Naive thymus-derived CD4-positive, alpha-beta T cell (primary cell): ENCODE measurements at regions of chr14 and their contacts with region 1.

Region 1: GRCh38 chr14:68248481-68249255 is 429.1 kb downstream of the RAD51B start:
- DNase-seq: peak in 7 of 9 donors; percentile 34 to 75 (median 64)
- ATAC-seq: peak; percentile 89
- H3K4me3 ChIP-seq: no peak overlapping the region
- H3K4me3 Mint-ChIP-seq: no peak overlapping the region
- H3K27ac ChIP-seq: no peak overlapping the region
- H3K27ac Mint-ChIP-seq: peak overlapping the region in 7 of 9 donors; percentile 41 to 81 (median 64)
- H3K4me1 ChIP-seq: peaks cover 0 to 13% of the 10 kb centered on the region in 2 donors
- H3K4me1 Mint-ChIP-seq: peaks cover 14 to 52% (median 47%) of the 10 kb centered on the region in 7 donors
- H3K27me3 ChIP-seq: no peaks in the 10 kb centered on the region
- H3K27me3 Mint-ChIP-seq: no peaks in the 10 kb centered on the region

Region 2: GRCh38 chr14:67846029-67846610 is 402.5 kb before region 1 on chr14:
- CTCF ChIA-PET with region 1: no interaction called
- POLR2A ChIA-PET with region 1: no interaction called
- intact Hi-C with region 1: no loop called
- DNase-seq: no peak
- ATAC-seq: no peak
- H3K4me3 ChIP-seq: no peak overlapping the region
- H3K4me3 Mint-ChIP-seq: no peak overlapping the region
- H3K27ac ChIP-seq: no peak overlapping the region
- H3K27ac Mint-ChIP-seq: no peak overlapping the region
- H3K4me1 ChIP-seq: no peaks in the 10 kb centered on the region
- H3K4me1 Mint-ChIP-seq: peaks cover 0 to 20% (median 11%) of the 10 kb centered on the region in 7 donors
- H3K27me3 ChIP-seq: no peaks in the 10 kb centered on the region
- H3K27me3 Mint-ChIP-seq: no peaks in the 10 kb centered on the region

Region 3: DNA sequence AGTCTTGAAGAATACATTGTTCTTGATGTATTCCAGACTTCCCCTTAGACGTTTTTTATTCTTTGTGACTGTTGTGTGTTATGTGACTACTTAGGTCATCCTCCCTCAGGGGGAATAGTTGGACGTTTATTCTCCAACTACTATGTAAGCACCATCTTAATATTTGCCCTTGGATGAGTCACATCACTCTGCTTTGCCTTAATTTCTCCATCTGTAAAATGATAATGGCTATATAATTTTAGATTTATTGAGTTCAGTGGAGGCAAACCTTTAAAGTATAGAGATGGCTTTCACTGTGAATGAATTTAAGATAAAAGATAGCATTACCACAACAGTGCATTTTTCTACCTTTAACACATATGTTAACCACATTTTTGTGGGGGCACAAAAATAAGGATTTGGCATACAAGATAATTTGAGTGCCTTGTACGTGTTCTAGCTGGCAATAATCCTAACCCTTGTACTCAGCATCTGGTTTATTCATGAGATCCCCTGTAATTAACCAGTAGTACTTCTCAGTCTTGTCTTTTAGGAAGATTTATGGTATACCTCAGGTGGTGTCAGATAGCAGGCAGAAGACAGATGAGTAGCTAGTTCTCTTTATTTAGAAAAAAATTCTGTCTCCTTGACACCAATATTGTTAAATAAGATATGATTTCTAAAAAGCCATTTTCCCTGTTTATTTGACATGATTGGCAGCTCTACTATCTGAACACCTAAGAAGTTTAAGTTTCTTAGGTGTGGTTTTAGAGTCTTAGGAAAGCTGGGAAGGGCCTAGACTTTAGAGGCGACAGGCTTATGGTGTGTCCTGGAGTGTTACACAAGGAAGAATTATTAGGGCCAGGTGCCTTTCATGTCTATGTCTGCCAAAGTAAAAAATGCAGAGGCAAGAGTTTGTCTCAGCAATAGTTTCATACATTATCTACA is 276.8 kb before region 1 on chr14:
- CTCF ChIA-PET with region 1: no interaction called
- POLR2A ChIA-PET with region 1: no interaction called
- intact Hi-C with region 1: no loop called
- DNase-seq: no peak
- ATAC-seq: no peak
- H3K4me3 ChIP-seq: no peak overlapping the region
- H3K4me3 Mint-ChIP-seq: no peak overlapping the region
- H3K27ac ChIP-seq: no peak overlapping the region
- H3K27ac Mint-ChIP-seq: no peak overlapping the region
- H3K4me1 ChIP-seq: no peaks in the 10 kb centered on the region
- H3K4me1 Mint-ChIP-seq: no peaks in the 10 kb centered on the region
- H3K27me3 ChIP-seq: no peaks in the 10 kb centered on the region
- H3K27me3 Mint-ChIP-seq: no peaks in the 10 kb centered on the region

Region 4: GRCh38 chr14:68261092-68261842 is 12.6 kb after region 1 on chr14:
- CTCF ChIA-PET with region 1: interaction called, 16 read pairs
- POLR2A ChIA-PET with region 1: interaction called, 12 read pairs
- intact Hi-C with region 1: no loop called
- DNase-seq: peak in 4 of 9 donors; percentile 23 to 32 (median 29)
- ATAC-seq: peak; percentile 41
- H3K4me3 ChIP-seq: peak overlapping the region; percentile 10
- H3K4me3 Mint-ChIP-seq: peak overlapping the region in 9 of 10 donors; percentile 59 to 83 (median 75)
- H3K27ac ChIP-seq: peak overlapping the region; percentile 64
- H3K27ac Mint-ChIP-seq: peak overlapping the region; percentile 73 to 99 (median 92)
- H3K4me1 ChIP-seq: peaks cover 0 to 49% of the 10 kb centered on the region in 2 donors
- H3K4me1 Mint-ChIP-seq: peaks cover 41 to 85% (median 80%) of the 10 kb centered on the region in 7 donors
- H3K27me3 ChIP-seq: no peaks in the 10 kb centered on the region
- H3K27me3 Mint-ChIP-seq: no peaks in the 10 kb centered on the region

Region 5: GRCh38 chr14:68328509-68328908 is 79.8 kb after region 1 on chr14:
- CTCF ChIA-PET with region 1: no interaction called
- POLR2A ChIA-PET with region 1: no interaction called
- intact Hi-C with region 1: no loop called
- DNase-seq: no peak
- ATAC-seq: no peak
- H3K4me3 ChIP-seq: no peak overlapping the region
- H3K4me3 Mint-ChIP-seq: no peak overlapping the region
- H3K27ac ChIP-seq: no peak overlapping the region
- H3K27ac Mint-ChIP-seq: no peak overlapping the region
- H3K4me1 ChIP-seq: no peaks in the 10 kb centered on the region
- H3K4me1 Mint-ChIP-seq: peaks cover 0 to 9% (median 8%) of the 10 kb centered on the region in 7 donors
- H3K27me3 ChIP-seq: no peaks in the 10 kb centered on the region
- H3K27me3 Mint-ChIP-seq: no peaks in the 10 kb centered on the region

Region 6: GRCh38 chr14:68349900-68350629 is 101.4 kb after region 1 on chr14:
- CTCF ChIA-PET with region 1: no interaction called
- POLR2A ChIA-PET with region 1: interaction called, 3 read pairs
- intact Hi-C with region 1: loop called in 1 of 2 experiments (anchors 1 kb)
- DNase-seq: no peak
- ATAC-seq: no peak
- H3K4me3 ChIP-seq: no peak overlapping the region
- H3K4me3 Mint-ChIP-seq: no peak overlapping the region
- H3K27ac ChIP-seq: no peak overlapping the region
- H3K27ac Mint-ChIP-seq: no peak overlapping the region
- H3K4me1 ChIP-seq: no peaks in the 10 kb centered on the region
- H3K4me1 Mint-ChIP-seq: peaks cover 0 to 13% (median 10%) of the 10 kb centered on the region in 7 donors
- H3K27me3 ChIP-seq: no peaks in the 10 kb centered on the region
- H3K27me3 Mint-ChIP-seq: no peaks in the 10 kb centered on the region

Region 7: DNA sequence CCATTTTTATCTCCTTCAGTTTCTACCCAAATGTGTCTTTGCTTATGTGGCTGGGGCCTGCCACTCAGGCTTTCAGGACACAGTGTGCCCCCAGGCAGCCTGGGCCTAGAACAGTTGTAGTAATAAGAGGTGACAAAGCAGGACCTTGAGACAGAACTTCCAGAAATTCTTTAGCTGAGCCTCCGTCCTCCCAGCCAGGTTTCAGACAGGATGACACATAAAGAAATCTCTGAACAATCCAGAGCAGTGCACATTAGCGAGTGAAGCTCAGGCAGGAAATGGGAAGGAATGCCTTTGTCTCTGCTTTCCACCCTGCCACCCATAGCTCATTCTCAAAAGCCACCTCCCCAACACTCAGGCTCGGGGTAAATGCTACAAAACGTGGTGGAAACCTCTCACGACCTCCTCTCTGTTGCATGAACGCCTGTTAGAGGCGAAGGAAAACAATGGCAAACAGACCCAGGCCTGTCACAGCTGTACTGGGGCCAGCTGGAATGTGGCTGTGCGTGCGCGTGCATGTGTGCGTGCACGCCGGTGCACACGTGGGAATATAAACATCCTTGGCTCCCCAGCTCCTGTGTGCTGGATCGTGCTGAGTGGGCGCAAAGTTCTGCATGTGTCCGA is 257.5 kb after region 1 on chr14:
- CTCF ChIA-PET with region 1: interaction called, 33 read pairs
- POLR2A ChIA-PET with region 1: interaction called, 4 read pairs
- intact Hi-C with region 1: loop called in 1 of 2 experiments (anchors 1 kb)
- DNase-seq: peak in 2 of 9 donors; percentile 13 to 14
- ATAC-seq: no peak
- H3K4me3 ChIP-seq: peak overlapping the region; percentile 19
- H3K4me3 Mint-ChIP-seq: peak overlapping the region; percentile 39 to 84 (median 78)
- H3K27ac ChIP-seq: peak overlapping the region; percentile 52
- H3K27ac Mint-ChIP-seq: peak overlapping the region in 8 of 9 donors; percentile 89 to 98 (median 93)
- H3K4me1 ChIP-seq: peaks cover 29 to 66% of the 10 kb centered on the region in 2 donors
- H3K4me1 Mint-ChIP-seq: peaks cover 28 to 93% (median 86%) of the 10 kb centered on the region in 7 donors
- H3K27me3 ChIP-seq: no peaks in the 10 kb centered on the region
- H3K27me3 Mint-ChIP-seq: no peaks in the 10 kb centered on the region

Region 8: GRCh38 chr14:68780358-68781160 is 531.9 kb after region 1 on chr14:
- CTCF ChIA-PET with region 1: interaction called, 219 read pairs
- POLR2A ChIA-PET with region 1: interaction called, 203 read pairs
- intact Hi-C with region 1: no loop called
- DNase-seq: peak in 5 of 9 donors; percentile 26 to 39 (median 33)
- ATAC-seq: peak; percentile 31
- H3K4me3 ChIP-seq: peak overlapping the region; percentile 57
- H3K4me3 Mint-ChIP-seq: peak overlapping the region; percentile 74 to 87 (median 84)
- H3K27ac ChIP-seq: peak overlapping the region; percentile 65
- H3K27ac Mint-ChIP-seq: peak overlapping the region; percentile 82 to 94 (median 92)
- H3K4me1 ChIP-seq: peaks cover 62 to 68% of the 10 kb centered on the region in 2 donors
- H3K4me1 Mint-ChIP-seq: peaks cover 39 to 90% (median 82%) of the 10 kb centered on the region in 7 donors
- H3K27me3 ChIP-seq: no peaks in the 10 kb centered on the region
- H3K27me3 Mint-ChIP-seq: no peaks in the 10 kb centered on the region

Region 9: DNA sequence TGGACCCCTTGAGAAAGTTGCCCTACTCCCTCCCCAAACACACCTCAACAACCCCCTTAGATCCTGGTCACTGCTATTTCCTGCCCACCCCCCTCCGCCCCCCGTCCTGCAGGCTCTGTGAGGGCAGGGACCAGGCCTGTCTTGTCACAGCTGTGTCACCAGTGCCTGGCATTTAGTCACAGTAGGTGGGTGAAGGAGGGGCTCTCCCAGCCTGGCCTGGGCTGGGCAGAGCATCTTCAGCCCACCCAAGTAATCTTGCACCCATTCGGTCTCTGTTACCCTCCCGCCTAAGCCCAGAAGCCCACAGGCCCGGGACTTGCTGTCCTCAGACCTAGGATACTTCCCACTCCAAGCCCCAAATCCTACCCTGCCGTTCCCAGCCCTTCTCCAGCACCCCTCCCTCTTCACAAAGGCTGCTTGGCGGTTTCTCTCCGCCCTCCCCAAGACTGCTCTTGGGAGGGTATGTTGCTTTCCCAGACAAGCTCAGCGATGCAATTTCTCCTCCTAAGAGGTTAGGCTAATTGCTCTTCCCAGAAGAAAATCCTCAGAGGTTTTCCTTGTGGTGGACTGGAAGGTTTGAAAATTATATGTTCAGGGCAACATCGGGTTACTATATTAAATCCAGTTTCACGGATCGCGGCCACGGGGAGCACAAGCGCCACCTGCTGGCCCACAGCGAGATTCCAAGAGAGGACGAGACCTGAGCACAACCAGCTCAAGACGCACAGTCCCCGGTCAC is 595.0 kb after region 1 on chr14:
- CTCF ChIA-PET with region 1: interaction called, 45 read pairs
- POLR2A ChIA-PET with region 1: no interaction called
- intact Hi-C with region 1: loop called (anchors 1 kb)
- DNase-seq: peak; percentile 42 to 76 (median 68)
- ATAC-seq: peak; percentile 86
- H3K4me3 ChIP-seq: no peak overlapping the region
- H3K4me3 Mint-ChIP-seq: peak overlapping the region in 9 of 10 donors; percentile 30 to 62 (median 48)
- H3K27ac ChIP-seq: no peak overlapping the region
- H3K27ac Mint-ChIP-seq: peak overlapping the region in 3 of 9 donors; percentile 12 to 47 (median 29)
- H3K4me1 ChIP-seq: peaks cover 7 to 12% of the 10 kb centered on the region in 2 donors
- H3K4me1 Mint-ChIP-seq: peaks cover 12 to 34% (median 15%) of the 10 kb centered on the region in 7 donors
- H3K27me3 ChIP-seq: no peaks in the 10 kb centered on the region
- H3K27me3 Mint-ChIP-seq: peaks cover 0 to 9% (median 0%) of the 10 kb centered on the region in 5 donors